ENCODE measurements at regions of chr3 and their contacts with region 1.

Region 1: DNA sequence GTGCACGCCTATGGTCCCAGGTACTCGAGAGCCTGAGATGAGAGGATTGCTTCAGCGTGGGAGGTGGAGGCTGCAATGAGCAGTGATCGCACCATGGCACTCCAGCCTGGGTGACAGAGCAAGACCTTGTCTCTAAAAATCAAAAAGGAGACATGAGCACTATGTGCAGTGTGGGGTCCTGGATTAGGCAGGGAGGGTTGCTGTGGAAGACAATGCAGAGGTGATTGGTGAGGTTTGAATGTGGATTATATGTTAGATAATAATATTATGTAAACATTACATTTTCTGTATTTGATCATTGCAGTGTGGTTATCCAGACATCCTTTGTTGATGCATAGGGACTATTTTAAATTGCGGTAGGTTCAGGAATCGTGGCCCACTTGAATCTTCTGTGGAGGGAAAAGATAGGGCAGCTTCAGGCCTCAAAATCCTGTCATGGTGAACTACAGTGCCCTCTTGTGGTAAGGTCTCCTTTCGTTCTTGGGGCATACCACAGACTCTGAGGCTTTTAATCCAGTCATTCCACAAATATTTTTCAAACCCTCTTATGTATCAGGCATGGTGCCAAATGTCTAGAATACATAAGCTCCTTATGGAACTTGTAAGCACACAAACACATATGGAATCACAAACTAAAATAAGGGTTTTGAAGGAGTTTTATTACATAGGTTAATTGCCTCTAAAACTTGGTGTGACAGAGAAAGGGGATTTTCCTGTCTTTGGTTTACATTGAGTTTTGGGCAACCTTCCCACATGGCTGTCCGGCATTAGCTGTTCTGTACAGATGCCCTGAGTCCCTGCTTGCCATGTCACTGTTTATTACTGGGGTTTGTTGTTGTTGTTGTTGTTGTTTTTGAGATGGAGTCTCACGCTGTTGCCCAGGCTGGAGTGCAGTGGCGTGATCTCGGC is 37.7 kb downstream of the GPD1L start:
- DNase-seq: peak; percentile 55
- H3K4me3 ChIP-seq: no peak overlapping the region
- H3K27me3 ChIP-seq: no peaks in the 10 kb centered on the region
- CTCF ChIP-seq: peak; percentile 74

Region 2: GRCh38 chr3:32018757-32019564 is 125.1 kb before region 1 on chr3:
- CTCF ChIA-PET with region 1: interaction called, 29 read pairs
- POLR2A ChIA-PET with region 1: no interaction called
- DNase-seq: no peak
- H3K4me3 ChIP-seq: no peak overlapping the region
- H3K27me3 ChIP-seq: no peaks in the 10 kb centered on the region
- CTCF ChIP-seq: peak; percentile 74

Region 3: GRCh38 chr3:32132706-32133105 is 11.4 kb before region 1 on chr3:
- CTCF ChIA-PET with region 1: interaction called, 17 read pairs
- POLR2A ChIA-PET with region 1: no interaction called
- DNase-seq: no peak
- H3K4me3 ChIP-seq: no peak overlapping the region
- H3K27me3 ChIP-seq: no peaks in the 10 kb centered on the region
- CTCF ChIP-seq: no peak

Region 4: DNA sequence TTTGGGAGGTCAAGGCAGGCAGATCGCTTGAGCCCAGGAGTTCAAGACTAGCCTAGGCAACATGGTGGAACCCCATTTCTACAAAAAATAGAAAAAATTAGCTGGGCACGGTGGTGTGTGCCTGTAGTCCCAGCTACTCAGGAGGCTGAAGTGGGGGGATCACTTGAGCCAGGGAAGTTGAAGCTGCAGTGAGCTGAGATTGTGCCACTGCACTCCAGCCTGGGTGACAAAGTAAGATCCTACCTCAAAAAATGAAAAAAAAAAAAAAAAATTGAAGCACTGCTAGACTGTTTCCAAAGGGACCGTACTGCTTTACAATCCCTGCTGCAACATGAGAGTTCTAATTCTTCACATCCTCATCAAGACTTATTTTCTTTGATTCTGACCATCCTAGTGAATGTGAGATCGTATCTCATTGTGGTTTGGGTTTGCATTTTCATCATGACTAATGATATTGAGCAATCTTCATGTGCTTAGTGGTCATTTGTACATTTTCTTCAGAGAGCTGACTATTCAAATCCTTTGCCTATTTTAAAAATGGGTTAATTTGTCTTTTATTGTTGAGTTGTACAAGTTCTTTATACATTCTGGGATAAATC is 105.2 kb after region 1 on chr3:
- CTCF ChIA-PET with region 1: no interaction called
- POLR2A ChIA-PET with region 1: no interaction called
- DNase-seq: peak; percentile 77
- H3K4me3 ChIP-seq: no peak overlapping the region
- H3K27me3 ChIP-seq: peaks cover 5% of the 10 kb centered on the region
- CTCF ChIP-seq: no peak

Measured in BJ (cell line).